Right cardiac atrium (tissue), 5 donors: ENCODE measurements at regions of chr6 and their contacts with region 1.

Region 1: GRCh38 chr6:95856876-95857364 is 158.9 kb upstream of the FUT9 start:
- DNase-seq: no peak
- ATAC-seq: no peak
- H3K4me3 ChIP-seq: no peak overlapping the region
- H3K27ac ChIP-seq: no peak overlapping the region
- H3K4me1 ChIP-seq: no peaks in the 10 kb centered on the region
- H3K27me3 ChIP-seq: no peaks in the 10 kb centered on the region

Region 2: GRCh38 chr6:95423331-95423730 is 433.6 kb before region 1 on chr6:
- intact Hi-C with region 1: loop called in 1 of 4 experiments (anchors 10 kb)
- DNase-seq: no peak
- ATAC-seq: no peak
- H3K4me3 ChIP-seq: no peak overlapping the region
- H3K27ac ChIP-seq: no peak overlapping the region
- H3K4me1 ChIP-seq: no peaks in the 10 kb centered on the region
- H3K27me3 ChIP-seq: no peaks in the 10 kb centered on the region

Region 3: DNA sequence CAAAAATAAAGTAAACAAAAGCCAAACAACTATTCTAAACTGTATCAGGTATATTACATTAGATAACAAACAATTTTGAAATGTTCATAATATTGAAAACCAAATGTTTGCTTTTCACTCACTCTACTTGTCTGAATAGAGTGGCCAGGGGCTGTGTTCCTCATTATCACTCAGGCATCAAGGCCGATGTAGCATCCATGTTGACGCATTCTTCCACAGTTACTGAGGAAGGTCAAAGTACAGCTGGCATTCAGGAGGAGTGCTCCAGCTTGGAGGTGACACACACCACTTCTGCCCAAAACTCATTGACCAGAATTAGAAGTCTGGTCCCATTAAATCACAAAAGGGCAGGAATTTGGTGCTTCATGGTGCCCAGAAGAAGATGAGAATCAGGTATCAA is 417.2 kb before region 1 on chr6:
- intact Hi-C with region 1: loop called in 1 of 4 experiments (anchors 10 kb)
- DNase-seq: no peak
- ATAC-seq: no peak
- H3K4me3 ChIP-seq: no peak overlapping the region
- H3K27ac ChIP-seq: no peak overlapping the region
- H3K4me1 ChIP-seq: no peaks in the 10 kb centered on the region
- H3K27me3 ChIP-seq: no peaks in the 10 kb centered on the region

Region 4: DNA sequence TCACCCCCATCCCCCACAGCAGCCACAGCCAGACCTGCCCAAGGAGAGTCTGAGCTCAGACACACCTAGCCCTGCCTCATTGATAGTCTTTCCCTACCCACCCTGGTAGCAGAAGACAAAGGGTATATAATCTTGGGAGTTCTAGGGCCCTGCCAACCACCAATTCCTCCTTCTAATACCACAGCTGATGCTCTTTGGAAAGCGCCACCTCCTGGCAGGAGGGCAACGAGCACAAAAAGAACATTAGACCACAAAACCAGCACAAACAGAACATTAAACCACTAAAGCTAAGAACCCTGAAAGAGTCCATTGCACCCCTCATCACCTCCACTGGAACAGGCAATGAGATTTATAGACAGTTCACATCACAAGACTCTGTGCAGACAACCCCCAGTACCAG is 37.0 kb before region 1 on chr6:
- intact Hi-C with region 1: no loop called
- DNase-seq: no peak
- ATAC-seq: no peak
- H3K4me3 ChIP-seq: no peak overlapping the region
- H3K27ac ChIP-seq: no peak overlapping the region
- H3K4me1 ChIP-seq: no peaks in the 10 kb centered on the region
- H3K27me3 ChIP-seq: no peaks in the 10 kb centered on the region